T-cell (primary cell): ENCODE measurements at regions of chr16 and their contacts with region 1.

Region 1: GRCh38 chr16:28974437-28975157 is at the start of gene SPNS1:
- DNase-seq: peak; percentile 73 to 94 (median 85)
- ATAC-seq: peak; percentile 89 to 94 (median 93)
- H3K4me3 ChIP-seq: peak within 1 kb of the TSS; percentile 82 to 97
- H3K4me3 Mint-ChIP-seq: peak within 1 kb of the TSS; percentile 98 to 99 (median 98)
- H3K27ac ChIP-seq: peak within 1 kb of the TSS; percentile 53
- H3K27ac Mint-ChIP-seq: peak within 1 kb of the TSS; percentile 89 to 92
- H3K4me1 ChIP-seq: peaks cover 11 to 33% of the 10 kb centered on the region in 2 experiments
- H3K4me1 Mint-ChIP-seq: peaks cover 39 to 44% (median 40%) of the 10 kb centered on the region in 3 donors
- H3K27me3 ChIP-seq: no peaks in the 10 kb centered on the region
- H3K27me3 Mint-ChIP-seq: no peaks in the 10 kb centered on the region
- total RNA-seq, gene SPNS1: 28.2 to 53.2 (median 47.7) TPM

Region 2: DNA sequence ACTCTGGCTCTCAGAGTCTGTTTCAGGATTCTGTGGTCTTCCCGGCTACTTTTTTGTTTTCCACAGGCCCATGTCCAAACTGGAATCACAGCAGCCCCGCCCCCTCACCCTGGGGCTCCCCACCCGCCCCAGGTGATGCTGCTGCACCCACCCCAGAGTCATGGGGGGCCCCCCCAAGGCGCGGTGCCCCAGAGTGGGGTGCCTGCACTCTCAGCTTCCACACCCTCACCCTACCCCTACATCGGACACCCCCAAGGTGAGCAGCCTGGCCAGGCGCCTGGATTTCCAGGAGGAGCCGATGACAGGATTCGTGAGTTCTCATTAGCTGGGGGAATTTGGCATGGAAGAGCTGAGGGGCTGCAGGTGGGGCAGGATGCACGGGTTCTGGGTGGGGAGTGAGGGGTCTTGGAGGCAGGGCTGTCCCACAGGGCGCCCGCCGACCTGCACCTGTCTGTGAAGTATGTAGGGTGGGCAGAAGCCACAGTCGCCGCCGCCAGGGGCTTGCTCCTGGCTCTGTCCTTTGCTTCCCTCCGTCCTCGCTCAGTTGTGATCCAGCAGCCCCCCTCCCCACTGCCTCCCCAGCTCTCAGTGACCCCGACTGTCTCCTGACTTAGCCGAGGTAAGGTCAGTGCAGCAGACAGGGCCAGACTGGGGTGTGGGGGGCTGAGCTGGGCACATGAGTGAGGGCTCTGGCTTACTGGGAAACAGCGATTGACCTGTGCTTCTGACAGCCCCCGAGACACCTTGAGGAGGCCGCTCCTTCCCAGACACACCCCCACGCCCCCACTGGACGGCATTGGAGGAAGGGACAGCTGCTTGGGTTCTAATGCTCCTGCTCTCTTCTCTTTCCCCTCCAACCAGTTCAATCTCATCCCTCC is 138.5 kb before region 1 on chr16:
- CTCF ChIA-PET with region 1: interaction called in 1 of 2 experiments, 11 read pairs
- POLR2A ChIA-PET with region 1: no interaction called
- DNase-seq: no peak
- ATAC-seq: peak in 1 of 4 experiments; percentile 10
- H3K4me3 ChIP-seq: no peak overlapping the region
- H3K4me3 Mint-ChIP-seq: no peak overlapping the region
- H3K27ac ChIP-seq: no peak overlapping the region
- H3K27ac Mint-ChIP-seq: no peak overlapping the region
- H3K4me1 ChIP-seq: no peaks in the 10 kb centered on the region
- H3K4me1 Mint-ChIP-seq: peaks cover 1 to 6% (median 6%) of the 10 kb centered on the region in 3 donors
- H3K27me3 ChIP-seq: no peaks in the 10 kb centered on the region
- H3K27me3 Mint-ChIP-seq: no peaks in the 10 kb centered on the region

Region 3: GRCh38 chr16:28935924-28936783 is 38.4 kb before region 1 on chr16:
- CTCF ChIA-PET with region 1: no interaction called
- POLR2A ChIA-PET with region 1: no interaction called
- DNase-seq: peak; percentile 64 to 89 (median 77)
- ATAC-seq: peak; percentile 96 to 99 (median 99)
- H3K4me3 ChIP-seq: peak overlapping the region in 1 of 2 donors; percentile 20
- H3K4me3 Mint-ChIP-seq: peak overlapping the region; percentile 67 to 77 (median 73)
- H3K27ac ChIP-seq: no peak overlapping the region
- H3K27ac Mint-ChIP-seq: peak overlapping the region; percentile 40 to 57
- H3K4me1 ChIP-seq: peaks cover 2 to 18% of the 10 kb centered on the region in 2 experiments
- H3K4me1 Mint-ChIP-seq: peaks cover 12 to 28% (median 16%) of the 10 kb centered on the region in 3 donors
- H3K27me3 ChIP-seq: no peaks in the 10 kb centered on the region
- H3K27me3 Mint-ChIP-seq: no peaks in the 10 kb centered on the region

Region 4: GRCh38 chr16:28958216-28958615 is 16.4 kb before region 1 on chr16:
- CTCF ChIA-PET with region 1: no interaction called
- POLR2A ChIA-PET with region 1: no interaction called
- DNase-seq: no peak
- ATAC-seq: no peak
- H3K4me3 ChIP-seq: no peak overlapping the region
- H3K4me3 Mint-ChIP-seq: no peak overlapping the region
- H3K27ac ChIP-seq: no peak overlapping the region
- H3K27ac Mint-ChIP-seq: no peak overlapping the region
- H3K4me1 ChIP-seq: peaks cover 0 to 8% of the 10 kb centered on the region in 2 experiments
- H3K4me1 Mint-ChIP-seq: peaks cover 11 to 16% (median 11%) of the 10 kb centered on the region in 3 donors
- H3K27me3 ChIP-seq: no peaks in the 10 kb centered on the region
- H3K27me3 Mint-ChIP-seq: no peaks in the 10 kb centered on the region

Region 5: DNA sequence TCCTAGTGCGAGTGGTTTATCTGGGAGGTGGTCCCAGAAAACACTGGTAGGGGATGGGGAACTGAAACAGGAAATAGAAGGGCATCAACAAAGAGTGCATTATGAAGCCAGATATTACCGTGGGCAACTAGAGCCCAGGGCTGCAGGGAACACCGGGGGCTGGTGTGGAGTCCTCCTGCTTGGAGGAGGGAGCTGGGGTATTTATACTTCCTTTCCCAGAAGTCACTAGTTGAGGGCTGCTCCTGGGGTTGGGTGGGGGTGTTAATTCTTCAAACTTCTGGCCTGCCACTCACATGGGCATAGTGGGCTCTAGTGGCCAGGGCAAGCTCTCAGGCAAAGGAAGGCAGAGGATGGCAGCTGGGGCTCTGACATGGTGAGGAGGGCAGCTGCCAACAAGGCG is 25.0 kb after region 1 on chr16:
- CTCF ChIA-PET with region 1: interaction called in 1 of 2 experiments, 10 read pairs
- POLR2A ChIA-PET with region 1: no interaction called
- DNase-seq: no peak
- ATAC-seq: no peak
- H3K4me3 ChIP-seq: no peak overlapping the region
- H3K4me3 Mint-ChIP-seq: no peak overlapping the region
- H3K27ac ChIP-seq: no peak overlapping the region
- H3K27ac Mint-ChIP-seq: peak overlapping the region; percentile 12 to 34
- H3K4me1 ChIP-seq: peaks cover 2 to 12% of the 10 kb centered on the region in 2 experiments
- H3K4me1 Mint-ChIP-seq: peaks cover 14 to 16% (median 15%) of the 10 kb centered on the region in 3 donors
- H3K27me3 ChIP-seq: no peaks in the 10 kb centered on the region
- H3K27me3 Mint-ChIP-seq: no peaks in the 10 kb centered on the region

Region 6: DNA sequence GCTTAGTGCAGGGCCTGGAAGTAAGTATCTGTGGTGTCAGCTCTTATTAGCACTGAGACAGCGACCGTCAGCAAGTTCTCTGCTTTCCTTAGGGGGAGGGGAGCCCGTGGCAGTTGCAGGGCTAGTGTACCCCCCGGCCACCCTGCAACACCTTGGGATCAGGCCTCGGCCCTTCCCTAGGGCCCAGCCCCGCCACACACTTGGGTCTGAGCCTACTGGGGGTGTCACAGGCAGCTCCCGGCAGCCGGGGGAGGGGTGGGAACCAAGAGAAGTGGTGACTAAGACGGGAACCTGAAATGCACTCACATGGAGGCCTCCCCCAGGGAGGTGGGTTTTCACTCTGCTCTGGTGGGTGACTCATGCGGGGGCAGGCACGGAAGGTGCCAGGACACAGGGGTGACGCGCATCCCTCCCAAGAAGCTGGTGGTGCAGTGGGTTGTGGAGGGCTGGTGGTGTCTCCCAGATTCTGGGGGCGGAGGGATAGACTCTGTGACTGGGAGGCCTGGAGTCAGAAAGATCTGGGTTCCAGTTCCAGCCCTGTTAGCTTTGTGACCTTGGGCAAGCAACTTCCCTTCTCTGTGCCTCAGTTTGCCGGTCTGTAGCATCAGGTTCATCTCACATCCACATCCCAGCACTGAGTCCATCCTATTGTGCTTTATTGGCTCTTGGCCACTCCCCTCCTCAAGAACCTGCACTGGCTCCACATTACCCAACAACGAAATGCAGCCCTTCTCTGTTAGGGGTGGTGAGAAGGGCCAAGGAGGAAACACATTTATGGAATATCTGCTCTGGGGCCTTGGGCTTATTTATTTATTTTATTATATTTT is 54.8 kb after region 1 on chr16:
- CTCF ChIA-PET with region 1: no interaction called
- POLR2A ChIA-PET with region 1: no interaction called
- DNase-seq: peak in 27 of 35 experiments; percentile 20 to 80 (median 35)
- ATAC-seq: peak; percentile 75 to 96 (median 94)
- H3K4me3 ChIP-seq: no peak overlapping the region
- H3K4me3 Mint-ChIP-seq: peak overlapping the region; percentile 9 to 24 (median 17)
- H3K27ac ChIP-seq: no peak overlapping the region
- H3K27ac Mint-ChIP-seq: peak overlapping the region; percentile 61 to 87
- H3K4me1 ChIP-seq: peaks cover 18 to 36% of the 10 kb centered on the region in 2 experiments
- H3K4me1 Mint-ChIP-seq: peaks cover 36 to 42% (median 40%) of the 10 kb centered on the region in 3 donors
- H3K27me3 ChIP-seq: peaks cover 0 to 3% of the 10 kb centered on the region in 2 experiments
- H3K27me3 Mint-ChIP-seq: no peaks in the 10 kb centered on the region